Endothelial cell of umbilical vein (primary cell): ENCODE measurements at regions of chr11 and their contacts with region 1.

Region 1: DNA sequence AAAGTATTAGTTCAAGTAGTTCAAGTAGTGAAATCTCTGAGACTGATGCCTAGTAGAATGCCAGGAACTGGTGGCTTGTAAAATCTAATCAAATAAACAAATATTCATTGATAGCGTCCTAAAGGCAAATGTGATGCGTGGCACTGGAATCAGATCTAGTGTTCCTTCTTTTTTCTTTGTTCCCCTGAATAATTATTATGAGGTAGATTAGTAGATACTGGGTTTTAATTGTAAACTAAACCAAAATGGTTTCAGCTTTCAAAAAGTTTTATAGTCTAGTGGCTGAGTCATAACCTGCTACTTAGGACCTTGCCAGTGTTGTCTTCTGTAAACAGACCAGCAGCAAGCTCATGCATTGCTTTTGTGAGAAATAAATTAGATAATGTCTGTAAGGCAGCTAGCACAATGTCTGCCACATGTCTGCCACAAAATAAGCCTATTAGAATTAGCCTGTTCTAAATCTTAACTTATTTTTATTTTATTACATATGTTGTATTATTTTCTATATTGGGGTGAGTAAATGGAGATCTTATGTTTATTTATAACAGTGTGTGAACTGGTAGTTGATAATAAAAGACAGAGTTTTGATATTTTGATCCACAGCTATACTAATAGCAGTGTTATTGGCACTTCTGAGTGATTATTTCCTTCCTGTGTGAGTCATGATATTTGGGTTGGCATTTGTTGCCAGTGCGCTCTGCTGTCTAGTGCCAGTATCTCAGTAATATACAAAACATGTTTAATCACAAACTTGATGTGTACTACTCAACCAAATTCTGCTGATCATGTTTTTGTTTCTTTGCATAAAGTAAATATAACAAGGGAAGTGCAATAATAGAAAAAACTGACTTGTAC is 135.7 kb downstream of the TMEM135 start:
- DNase-seq: peak; percentile 94
- H3K4me3 ChIP-seq: no peak overlapping the region
- H3K27ac ChIP-seq: peak overlapping the region; percentile 70
- H3K4me1 ChIP-seq: peaks cover 25% of the 10 kb centered on the region
- H3K27me3 ChIP-seq: no peaks in the 10 kb centered on the region
- CTCF ChIP-seq: no peak
- POLR2A ChIP-seq: no peak

Region 2: DNA sequence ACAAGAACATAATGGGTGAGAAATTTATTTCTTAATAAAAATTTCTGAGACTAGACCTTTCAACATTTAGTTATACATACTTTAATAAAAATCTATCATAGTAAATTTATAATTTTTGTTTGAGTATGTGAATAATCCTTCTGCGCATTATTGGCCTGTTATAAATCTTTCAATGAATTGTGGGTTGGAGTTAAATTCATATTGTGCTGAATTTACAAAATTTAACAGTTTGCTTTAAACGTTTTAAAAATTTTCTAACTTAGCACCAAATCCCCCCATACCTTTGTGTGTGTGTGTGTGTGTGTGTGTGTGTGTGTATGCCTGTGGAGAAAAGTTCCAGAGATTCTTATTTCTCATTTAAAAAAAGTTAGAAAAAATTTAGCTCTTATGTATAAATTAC is 24.7 kb before region 1 on chr11:
- CTCF ChIA-PET with region 1: no interaction called
- POLR2A ChIA-PET with region 1: no interaction called
- dilution Hi-C with region 1: no loop called
- intact Hi-C with region 1: loop called (anchors 1 kb)
- DNase-seq: no peak
- H3K4me3 ChIP-seq: no peak overlapping the region
- H3K27ac ChIP-seq: no peak overlapping the region
- H3K4me1 ChIP-seq: peaks cover 13% of the 10 kb centered on the region
- H3K27me3 ChIP-seq: no peaks in the 10 kb centered on the region
- CTCF ChIP-seq: no peak
- POLR2A ChIP-seq: no peak

Region 3: GRCh38 chr11:87239001-87239400 is 65.6 kb after region 1 on chr11:
- CTCF ChIA-PET with region 1: no interaction called
- POLR2A ChIA-PET with region 1: no interaction called
- dilution Hi-C with region 1: no loop called
- intact Hi-C with region 1: loop called (anchors 2 kb)
- DNase-seq: peak; percentile 91
- H3K4me3 ChIP-seq: peak overlapping the region in 1 of 3 experiments; percentile 52
- H3K27ac ChIP-seq: peak overlapping the region; percentile 43
- H3K4me1 ChIP-seq: peaks cover 24% of the 10 kb centered on the region
- H3K27me3 ChIP-seq: no peaks in the 10 kb centered on the region
- CTCF ChIP-seq: no peak
- POLR2A ChIP-seq: no peak

Region 4: DNA sequence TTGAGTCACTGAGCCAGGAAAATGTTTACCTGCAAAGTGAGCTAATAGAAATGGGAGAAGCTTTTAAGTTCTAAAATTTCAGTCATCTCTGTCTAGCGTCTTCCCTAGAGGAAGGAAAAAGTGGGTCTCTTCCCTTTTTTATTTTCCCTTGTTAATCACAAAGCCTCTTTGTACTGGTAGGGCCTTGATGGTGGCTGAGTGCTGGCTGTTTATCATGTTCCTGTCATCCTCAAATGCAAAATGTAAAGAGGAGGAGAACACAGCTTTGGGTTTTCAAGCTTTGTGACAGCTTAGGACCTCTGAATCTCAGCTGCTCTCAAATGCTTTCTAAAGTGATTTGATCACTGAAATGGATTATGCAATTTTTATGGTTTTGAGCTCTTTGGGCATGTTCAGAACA is 86.3 kb after region 1 on chr11:
- CTCF ChIA-PET with region 1: no interaction called
- POLR2A ChIA-PET with region 1: no interaction called
- dilution Hi-C with region 1: no loop called
- intact Hi-C with region 1: loop called (anchors 5 kb)
- DNase-seq: no peak
- H3K4me3 ChIP-seq: no peak overlapping the region
- H3K27ac ChIP-seq: no peak overlapping the region
- H3K4me1 ChIP-seq: peaks cover 29% of the 10 kb centered on the region
- H3K27me3 ChIP-seq: no peaks in the 10 kb centered on the region
- CTCF ChIP-seq: no peak
- POLR2A ChIP-seq: no peak

Region 5: DNA sequence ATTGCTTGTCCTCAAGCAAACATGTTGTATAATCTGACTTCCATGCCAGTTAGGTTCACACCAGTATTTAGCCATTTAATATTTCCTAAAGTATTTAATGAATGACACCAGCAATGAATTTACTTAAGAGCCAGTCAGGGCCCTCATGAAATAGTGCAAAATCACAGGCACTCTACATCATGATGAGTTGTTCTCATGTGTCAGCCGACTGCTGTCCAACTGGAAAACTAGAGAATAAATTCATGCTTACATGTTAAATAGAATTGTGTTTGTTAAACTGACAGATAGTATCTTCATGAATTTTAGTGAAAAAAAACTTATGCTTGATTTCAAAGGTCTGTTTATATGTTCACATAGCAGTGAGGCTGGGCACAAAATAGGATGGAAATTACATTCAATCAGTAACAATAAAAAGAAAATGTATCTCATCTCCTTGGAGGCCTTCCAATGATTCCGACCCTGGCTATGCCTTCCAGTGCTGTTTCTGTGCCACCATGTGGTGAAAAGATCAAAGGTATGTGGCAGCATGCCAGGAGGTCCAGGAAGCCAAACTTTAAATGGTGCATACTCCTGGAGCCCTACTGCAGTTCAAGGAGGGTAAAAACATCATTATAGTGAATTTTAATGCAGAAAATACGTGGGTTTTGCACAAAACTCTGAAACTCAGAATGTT is 1118.9 kb after region 1 on chr11:
- CTCF ChIA-PET with region 1: no interaction called
- POLR2A ChIA-PET with region 1: no interaction called
- dilution Hi-C with region 1: no loop called
- intact Hi-C with region 1: no loop called
- DNase-seq: peak; percentile 57
- H3K4me3 ChIP-seq: no peak overlapping the region
- H3K27ac ChIP-seq: no peak overlapping the region
- H3K4me1 ChIP-seq: peaks cover 5% of the 10 kb centered on the region
- H3K27me3 ChIP-seq: no peaks in the 10 kb centered on the region
- CTCF ChIP-seq: no peak
- POLR2A ChIP-seq: no peak